ENCODE measurements at regions of chr6 and their contacts with region 1.

Region 1: GRCh38 chr6:32118782-32119628 is 9.0 kb downstream of the ATF6B start:
- DNase-seq: peak; percentile 57
- ATAC-seq: peak; percentile 96
- H3K4me3 ChIP-seq: no peak overlapping the region
- H3K27ac ChIP-seq: no peak overlapping the region
- H3K4me1 ChIP-seq: peaks cover 3% of the 10 kb centered on the region; the same call in 1 of the 2 replicates
- H3K27me3 ChIP-seq: no peaks in the 10 kb centered on the region
- CTCF ChIP-seq: peak; percentile 95

Region 2: GRCh38 chr6:32153564-32154513 is 34.8 kb after region 1 on chr6 and contains the start of gene PPT2:
- CTCF ChIA-PET with region 1: interaction called, 5 read pairs
- POLR2A ChIA-PET with region 1: no interaction called
- in situ Hi-C with region 1: no loop called
- intact Hi-C with region 1: loop called (anchors 2 kb)
- DNase-seq: peak; percentile 71
- ATAC-seq: peak; percentile 83
- H3K4me3 ChIP-seq: peak within 1 kb of the TSS; percentile 81 to 96
- H3K27ac ChIP-seq: peak within 1 kb of the TSS; percentile 84
- H3K4me1 ChIP-seq: peaks cover 21% of the 10 kb centered on the region
- H3K27me3 ChIP-seq: no peaks in the 10 kb centered on the region
- CTCF ChIP-seq: no peak; the same call in 1 of the 2 replicates
- total RNA-seq, gene PPT2: 20.1 TPM

Region 3: DNA sequence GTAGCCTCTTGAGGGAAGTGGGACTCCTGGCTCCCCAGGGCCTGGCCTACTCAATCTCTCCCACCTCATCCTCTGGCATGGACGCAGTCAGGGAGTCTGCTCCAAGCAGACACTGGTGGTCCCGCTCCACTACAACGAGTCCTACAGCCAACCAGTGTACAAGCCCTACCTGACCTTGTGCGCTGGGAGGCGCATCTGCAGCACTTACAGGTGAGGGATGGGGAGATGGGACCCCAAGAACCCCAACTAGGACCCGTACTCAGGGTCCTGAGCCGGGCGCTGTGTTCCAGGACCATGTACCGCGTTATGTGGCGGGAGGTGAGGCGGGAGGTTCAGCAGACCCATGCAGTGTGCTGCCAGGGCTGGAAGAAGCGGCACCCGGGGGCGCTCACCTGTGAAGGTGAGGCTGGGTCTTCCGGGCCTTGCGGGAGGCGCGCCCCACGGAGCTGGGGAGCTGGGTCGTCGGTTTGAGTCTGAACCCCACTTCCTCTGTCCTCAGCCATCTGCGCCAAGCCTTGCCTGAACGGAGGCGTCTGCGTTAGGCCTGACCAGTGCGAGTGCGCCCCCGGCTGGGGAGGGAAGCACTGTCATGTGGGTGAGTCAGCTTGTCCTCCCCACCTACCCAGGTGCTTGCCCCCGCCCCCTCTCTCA is 47.5 kb after region 1 on chr6:
- CTCF ChIA-PET with region 1: interaction called, 10 read pairs
- POLR2A ChIA-PET with region 1: no interaction called
- in situ Hi-C with region 1: no loop called
- intact Hi-C with region 1: no loop called
- DNase-seq: no peak
- ATAC-seq: no peak; the same call in 1 of the 2 replicates
- H3K4me3 ChIP-seq: no peak overlapping the region
- H3K27ac ChIP-seq: no peak overlapping the region
- H3K4me1 ChIP-seq: no peaks in the 10 kb centered on the region
- H3K27me3 ChIP-seq: no peaks in the 10 kb centered on the region
- CTCF ChIP-seq: no peak

Region 4: DNA sequence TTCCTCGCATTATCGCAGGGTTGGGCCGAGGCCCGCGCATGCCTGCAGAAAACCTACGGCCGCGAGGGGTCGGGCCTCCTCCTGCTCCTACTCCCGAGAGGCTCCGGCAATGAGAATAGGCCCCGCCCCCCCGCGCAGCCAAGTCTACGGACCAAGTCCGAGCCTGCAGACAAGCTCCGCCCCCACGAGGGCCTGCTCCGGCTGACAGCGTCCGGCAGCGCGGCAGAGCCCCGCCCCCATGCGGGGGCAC is 76.6 kb after region 1 on chr6:
- CTCF ChIA-PET with region 1: interaction called, 9 read pairs
- POLR2A ChIA-PET with region 1: no interaction called
- in situ Hi-C with region 1: no loop called
- intact Hi-C with region 1: loop called (anchors 10 kb)
- DNase-seq: peak; percentile 92
- ATAC-seq: no peak
- H3K4me3 ChIP-seq: peak overlapping the region; percentile 86 to 94; a peak in 3 of 4 replicates
- H3K27ac ChIP-seq: peak overlapping the region; percentile 99; the same call in 1 of the 2 replicates
- H3K4me1 ChIP-seq: peaks cover 33% of the 10 kb centered on the region
- H3K27me3 ChIP-seq: no peaks in the 10 kb centered on the region
- CTCF ChIP-seq: no peak

Region 5: GRCh38 chr6:32369675-32370074 is 250.7 kb after region 1 on chr6:
- CTCF ChIA-PET with region 1: no interaction called
- POLR2A ChIA-PET with region 1: no interaction called
- in situ Hi-C with region 1: no loop called
- intact Hi-C with region 1: no loop called
- DNase-seq: peak; percentile 30
- ATAC-seq: no peak; the same call in 1 of the 2 replicates
- H3K4me3 ChIP-seq: no peak overlapping the region
- H3K27ac ChIP-seq: no peak overlapping the region
- H3K4me1 ChIP-seq: no peaks in the 10 kb centered on the region
- H3K27me3 ChIP-seq: no peaks in the 10 kb centered on the region
- CTCF ChIP-seq: no peak

Measured in Panc1 (cell line).